Activated B cell treated with CpG ODN at 0.5 μM for 24 hours (primary cell): ENCODE measurements at regions of chr22 and their contacts with region 1.

Region 1: DNA sequence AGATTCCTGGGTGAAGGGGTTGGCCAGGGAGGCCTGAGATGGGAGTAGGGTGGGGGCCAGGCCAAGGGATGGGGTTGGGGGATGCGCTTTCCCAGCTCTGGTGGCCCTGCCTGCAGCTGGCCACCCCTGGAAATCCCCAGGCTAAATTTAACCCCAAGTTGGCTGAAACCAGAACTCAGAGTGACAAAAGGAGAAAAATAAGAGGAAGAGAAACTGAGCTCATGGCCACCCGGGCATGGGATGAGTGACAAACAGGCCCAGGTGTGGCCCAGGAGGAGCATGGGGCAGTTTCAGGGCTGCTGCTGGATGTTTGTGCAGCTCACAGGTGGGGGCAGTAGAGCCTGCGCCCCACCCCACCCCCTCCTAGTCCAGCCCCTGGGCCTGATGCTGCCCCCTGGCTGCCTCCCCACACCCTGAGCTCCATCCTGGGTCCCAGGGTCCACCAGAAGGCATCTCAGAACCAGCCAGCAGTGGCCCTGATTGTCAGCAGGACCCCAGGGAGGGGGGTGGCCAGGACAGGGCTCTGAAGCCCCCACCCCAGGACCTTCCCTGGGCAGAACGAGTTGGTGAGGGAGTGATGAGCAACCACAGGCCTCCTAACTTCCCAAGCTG is 48.0 kb downstream of the IGLL5 start:
- DNase-seq: peak; percentile 77
- ATAC-seq: peak; percentile 87
- H3K4me3 Mint-ChIP-seq: peak overlapping the region; percentile 59
- H3K27ac Mint-ChIP-seq: peak overlapping the region; percentile 96
- H3K4me1 Mint-ChIP-seq: peaks cover 98% of the 10 kb centered on the region
- H3K27me3 Mint-ChIP-seq: no peaks in the 10 kb centered on the region
- CTCF ChIP-seq: no peak

Region 2: DNA sequence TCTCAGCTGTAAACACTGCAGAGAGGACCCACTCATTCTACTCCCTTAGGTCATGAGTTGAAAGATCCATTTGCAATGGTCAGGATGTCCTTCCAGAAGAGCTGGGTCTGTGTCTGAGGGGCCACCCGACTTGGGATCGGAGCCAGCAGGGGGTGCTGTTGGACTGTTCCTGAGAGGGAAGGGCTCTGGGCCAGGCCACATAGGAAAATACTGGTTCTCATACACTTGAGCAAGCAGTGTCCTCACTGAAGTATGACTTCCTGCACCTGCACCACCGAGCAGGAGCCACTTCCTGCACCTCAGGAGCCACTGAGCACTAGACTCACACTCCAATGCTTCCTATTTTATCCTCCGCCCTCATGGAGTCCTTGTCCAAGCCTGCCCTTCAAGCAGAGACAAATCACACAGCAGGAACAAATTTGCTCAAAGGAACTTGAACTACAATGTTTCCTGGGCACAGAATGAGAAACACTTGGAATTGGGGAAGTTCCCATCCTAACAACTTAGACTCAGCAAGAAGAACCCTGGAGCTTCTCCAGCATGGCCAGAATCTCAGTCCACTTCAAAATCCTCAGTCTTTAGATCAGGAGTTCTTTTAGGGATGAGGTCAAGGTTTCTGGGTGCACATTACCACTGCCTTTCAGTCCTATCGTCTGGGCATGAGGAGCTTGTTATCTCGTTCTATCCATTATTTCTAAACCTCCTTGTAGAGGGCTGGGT is 727.6 kb before region 1 on chr22:
- CTCF ChIA-PET with region 1: no interaction called
- POLR2A ChIA-PET with region 1: interaction called, 3 read pairs
- intact Hi-C with region 1: loop called (anchors 5 kb)
- DNase-seq: peak; percentile 80
- ATAC-seq: peak; percentile 83
- H3K4me3 Mint-ChIP-seq: peak overlapping the region; percentile 70
- H3K27ac Mint-ChIP-seq: peak overlapping the region; percentile 90
- H3K4me1 Mint-ChIP-seq: peaks cover 56% of the 10 kb centered on the region
- H3K27me3 Mint-ChIP-seq: no peaks in the 10 kb centered on the region
- CTCF ChIP-seq: no peak

Region 3: DNA sequence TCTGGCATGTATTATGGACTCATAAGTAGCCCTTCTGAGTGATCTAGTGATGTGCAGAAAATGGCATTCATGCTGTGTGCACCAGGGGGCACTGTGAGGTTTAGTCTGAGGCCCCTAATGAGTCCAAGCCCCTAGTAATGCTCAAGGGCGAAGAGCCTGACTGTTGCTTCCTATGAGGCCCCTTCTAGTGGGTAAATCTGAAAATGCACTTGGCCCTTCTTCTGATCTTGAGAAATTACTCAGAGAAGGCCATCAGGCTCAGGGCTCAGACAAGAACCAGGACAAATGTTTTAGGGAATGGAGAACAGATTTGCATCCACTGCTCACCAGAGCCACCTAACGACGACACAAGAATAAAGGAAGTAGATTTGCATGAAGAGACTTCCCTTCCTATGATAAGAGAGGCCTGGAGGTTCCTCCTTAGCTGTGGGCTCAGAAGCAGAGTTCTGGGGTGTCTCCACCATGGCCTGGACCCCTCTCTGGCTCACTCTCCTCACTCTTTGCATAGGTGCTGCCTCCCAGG is 215.4 kb before region 1 on chr22:
- CTCF ChIA-PET with region 1: no interaction called
- POLR2A ChIA-PET with region 1: interaction called, 10 read pairs
- intact Hi-C with region 1: no loop called
- DNase-seq: peak; percentile 41
- ATAC-seq: peak; percentile 68
- H3K4me3 Mint-ChIP-seq: peak overlapping the region; percentile 68
- H3K27ac Mint-ChIP-seq: peak overlapping the region; percentile 94
- H3K4me1 Mint-ChIP-seq: peaks cover 58% of the 10 kb centered on the region
- H3K27me3 Mint-ChIP-seq: no peaks in the 10 kb centered on the region
- CTCF ChIP-seq: no peak

Region 4: DNA sequence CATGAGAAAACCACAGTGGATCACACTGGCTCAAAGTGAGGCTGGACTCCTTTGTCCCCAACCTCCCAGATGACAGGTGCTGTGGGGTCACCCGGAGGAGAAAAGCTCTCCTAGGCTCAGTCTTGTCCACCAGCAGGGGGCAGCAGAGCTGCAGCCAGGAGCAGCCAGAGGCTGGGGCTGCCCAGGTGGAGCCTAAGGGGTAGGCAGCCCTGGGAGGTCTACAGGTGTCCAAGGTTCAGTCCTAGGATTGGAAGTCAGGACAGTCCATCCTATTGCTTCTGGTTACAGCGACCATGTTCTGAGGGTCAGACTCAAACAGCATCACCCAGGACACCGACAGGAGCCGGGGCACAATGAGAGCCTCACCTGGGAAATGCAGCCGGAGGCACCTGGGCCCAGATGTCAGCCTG is 125.6 kb before region 1 on chr22:
- CTCF ChIA-PET with region 1: interaction called, 20 read pairs
- POLR2A ChIA-PET with region 1: interaction called, 17 read pairs
- intact Hi-C with region 1: no loop called
- DNase-seq: peak; percentile 60
- ATAC-seq: peak; percentile 76
- H3K4me3 Mint-ChIP-seq: no peak overlapping the region
- H3K27ac Mint-ChIP-seq: no peak overlapping the region
- H3K4me1 Mint-ChIP-seq: peaks cover 21% of the 10 kb centered on the region
- H3K27me3 Mint-ChIP-seq: peaks cover 3% of the 10 kb centered on the region
- CTCF ChIP-seq: peak; percentile 80

Region 5: GRCh38 chr22:22855617-22856308 is 79.9 kb before region 1 on chr22:
- CTCF ChIA-PET with region 1: interaction called, 53 read pairs
- POLR2A ChIA-PET with region 1: interaction called, 35 read pairs
- intact Hi-C with region 1: loop called (anchors 1 kb)
- DNase-seq: peak; percentile 53
- ATAC-seq: peak; percentile 79
- H3K4me3 Mint-ChIP-seq: no peak overlapping the region
- H3K27ac Mint-ChIP-seq: peak overlapping the region; percentile 4
- H3K4me1 Mint-ChIP-seq: peaks cover 35% of the 10 kb centered on the region
- H3K27me3 Mint-ChIP-seq: peaks cover 10% of the 10 kb centered on the region
- CTCF ChIP-seq: no peak

Region 6: DNA sequence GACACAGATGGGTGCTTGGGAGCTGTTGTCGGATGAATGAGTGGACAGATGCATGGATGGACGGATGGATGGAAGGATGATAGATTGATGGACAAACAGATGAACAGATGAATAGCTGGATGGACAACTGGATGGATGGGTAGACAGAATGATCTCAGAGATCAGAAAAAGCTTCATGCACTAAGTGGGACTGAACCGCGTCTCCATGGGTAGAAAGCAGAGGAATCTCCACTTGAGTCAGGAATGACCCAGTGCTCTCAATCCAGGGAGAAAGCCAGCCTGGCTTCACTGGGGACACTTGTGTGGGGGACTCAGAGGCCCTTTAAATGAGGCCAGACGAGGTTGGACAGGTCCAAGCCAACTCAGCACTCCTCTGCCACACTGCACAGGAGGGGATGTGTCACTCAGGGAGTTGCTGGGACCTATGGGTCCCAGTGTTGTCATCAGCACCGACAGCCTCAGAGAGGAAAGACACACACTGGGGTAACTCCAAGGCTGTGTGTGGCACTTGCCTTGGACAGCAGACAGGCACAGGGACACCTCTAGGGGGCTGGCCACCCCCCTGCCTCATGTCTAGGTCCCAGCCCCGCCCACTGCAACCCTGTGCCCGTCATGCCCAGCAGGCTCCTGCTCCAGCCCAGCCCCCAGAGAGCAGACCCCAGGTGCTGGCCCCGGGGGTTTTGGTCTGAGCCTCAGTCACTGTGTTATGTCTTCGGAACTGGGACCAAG is 42.4 kb before region 1 on chr22:
- CTCF ChIA-PET with region 1: interaction called, 14 read pairs
- POLR2A ChIA-PET with region 1: interaction called, 701 read pairs
- intact Hi-C with region 1: no loop called
- DNase-seq: peak; percentile 27
- ATAC-seq: peak; percentile 53
- H3K4me3 Mint-ChIP-seq: peak overlapping the region; percentile 75
- H3K27ac Mint-ChIP-seq: peak overlapping the region; percentile 82
- H3K4me1 Mint-ChIP-seq: peaks cover 77% of the 10 kb centered on the region
- H3K27me3 Mint-ChIP-seq: peaks cover 8% of the 10 kb centered on the region
- CTCF ChIP-seq: no peak

Region 7: GRCh38 chr22:22952531-22953280 is 17.1 kb after region 1 on chr22:
- CTCF ChIA-PET with region 1: interaction called, 75 read pairs
- POLR2A ChIA-PET with region 1: interaction called, 38 read pairs
- intact Hi-C with region 1: loop called (anchors 2 kb)
- DNase-seq: no peak
- ATAC-seq: no peak
- H3K4me3 Mint-ChIP-seq: no peak overlapping the region
- H3K27ac Mint-ChIP-seq: peak overlapping the region; percentile 42
- H3K4me1 Mint-ChIP-seq: peaks cover 60% of the 10 kb centered on the region
- H3K27me3 Mint-ChIP-seq: no peaks in the 10 kb centered on the region
- CTCF ChIP-seq: no peak

Region 8: GRCh38 chr22:22976033-22976922 is 40.6 kb after region 1 on chr22:
- CTCF ChIA-PET with region 1: no interaction called
- POLR2A ChIA-PET with region 1: no interaction called
- intact Hi-C with region 1: no loop called
- DNase-seq: no peak
- ATAC-seq: no peak
- H3K4me3 Mint-ChIP-seq: no peak overlapping the region
- H3K27ac Mint-ChIP-seq: no peak overlapping the region
- H3K4me1 Mint-ChIP-seq: peaks cover under 1% of the 10 kb centered on the region
- H3K27me3 Mint-ChIP-seq: peaks cover 12% of the 10 kb centered on the region
- CTCF ChIP-seq: no peak

Region 9: DNA sequence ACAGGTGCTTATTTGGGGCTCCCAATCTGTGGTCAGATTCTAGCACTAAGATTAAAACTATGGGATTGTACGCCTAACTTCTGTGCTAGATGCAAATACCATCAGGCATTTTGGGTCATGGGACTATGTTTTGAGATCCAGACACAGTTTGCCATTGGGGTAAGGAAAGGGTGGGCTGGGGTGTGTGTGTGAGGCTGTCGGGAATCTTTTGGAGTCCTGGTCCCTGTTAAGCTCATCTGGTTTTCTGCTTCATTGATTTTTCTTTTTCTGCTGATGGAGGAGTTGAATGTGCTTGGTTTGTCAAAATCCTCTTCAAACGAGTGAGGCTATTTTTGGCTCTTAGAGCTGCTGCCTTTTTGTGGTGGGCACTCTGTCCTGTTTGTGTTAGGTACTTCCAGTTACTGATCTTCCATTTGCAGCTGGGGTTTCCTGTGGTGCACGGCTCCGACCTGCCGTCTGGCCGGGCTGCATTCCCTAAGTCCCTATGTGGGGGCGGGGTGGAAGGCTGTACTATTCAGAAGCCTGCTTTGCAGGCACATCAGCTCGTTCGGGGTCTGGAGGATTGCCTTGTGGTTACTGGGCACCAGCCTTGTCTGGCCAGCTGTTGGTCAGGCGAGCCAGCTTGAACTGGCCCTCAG is 247.5 kb after region 1 on chr22:
- CTCF ChIA-PET with region 1: no interaction called
- POLR2A ChIA-PET with region 1: no interaction called
- intact Hi-C with region 1: no loop called
- DNase-seq: no peak
- ATAC-seq: no peak
- H3K4me3 Mint-ChIP-seq: peak overlapping the region; percentile 81
- H3K27ac Mint-ChIP-seq: peak overlapping the region; percentile 19
- H3K4me1 Mint-ChIP-seq: peaks cover 64% of the 10 kb centered on the region
- H3K27me3 Mint-ChIP-seq: peaks cover 3% of the 10 kb centered on the region
- CTCF ChIP-seq: no peak